ENCODE measurements at regions of chr5 and their contacts with region 1.

Region 1: DNA sequence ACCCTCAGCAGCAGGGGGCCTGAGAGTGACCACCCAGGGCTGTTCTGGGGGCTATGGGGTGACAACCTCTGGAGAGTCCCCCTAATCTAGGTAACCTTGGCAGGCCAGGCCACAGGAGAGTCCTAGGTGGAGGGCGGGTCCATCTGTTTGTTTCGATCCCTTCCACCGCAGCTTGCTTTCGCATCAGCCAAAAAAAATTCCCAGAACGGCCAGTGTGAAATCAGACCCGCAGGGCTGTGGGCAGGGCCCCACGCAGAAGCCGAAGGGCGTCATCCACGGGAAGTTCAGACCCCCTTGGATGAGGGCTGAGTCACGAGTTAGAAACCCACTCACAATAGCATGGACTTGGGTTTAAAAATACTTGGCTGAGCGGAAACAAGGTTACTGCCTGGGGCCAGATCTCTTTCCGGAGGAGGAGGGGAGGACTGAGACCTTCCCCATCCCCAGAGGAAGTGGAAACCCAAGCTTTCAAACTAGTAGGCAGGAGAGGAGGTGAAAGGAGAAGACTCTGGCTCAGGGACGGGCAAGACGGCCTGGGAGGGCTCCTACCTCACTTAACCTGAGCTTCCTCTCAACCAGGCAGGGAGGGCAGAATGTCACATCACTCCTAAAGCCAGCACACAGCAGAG is 8.5 kb downstream of the STK10 start:
- DNase-seq: peak in 9 of 14 experiments; percentile 23 to 83 (median 41)
- ATAC-seq: peak; percentile 1
- H3K4me3 ChIP-seq: peak overlapping the region; percentile 57
- H3K4me3 Mint-ChIP-seq: peak overlapping the region; percentile 91
- H3K27ac ChIP-seq: peak overlapping the region; percentile 97 to 98
- H3K27ac Mint-ChIP-seq: peak overlapping the region; percentile 98
- H3K4me1 ChIP-seq: peaks cover 99% of the 10 kb centered on the region
- H3K4me1 Mint-ChIP-seq: peaks cover 93% of the 10 kb centered on the region
- H3K27me3 ChIP-seq: no peaks in the 10 kb centered on the region
- H3K27me3 Mint-ChIP-seq: no peaks in the 10 kb centered on the region
- CTCF ChIP-seq: no peak

Region 2: GRCh38 chr5:172065501-172065990 is 113.9 kb before region 1 on chr5:
- CTCF ChIA-PET with region 1: interaction called, 3 read pairs
- POLR2A ChIA-PET with region 1: interaction called, 41 read pairs
- intact Hi-C with region 1: no loop called
- DNase-seq: peak in 1 of 14 experiments; percentile 34
- ATAC-seq: no peak
- H3K4me3 ChIP-seq: no peak overlapping the region
- H3K4me3 Mint-ChIP-seq: no peak overlapping the region
- H3K27ac ChIP-seq: peak overlapping the region; percentile 69 to 84
- H3K27ac Mint-ChIP-seq: peak overlapping the region; percentile 89
- H3K4me1 ChIP-seq: peaks cover 44% of the 10 kb centered on the region
- H3K4me1 Mint-ChIP-seq: peaks cover 76% of the 10 kb centered on the region
- H3K27me3 ChIP-seq: no peaks in the 10 kb centered on the region
- H3K27me3 Mint-ChIP-seq: no peaks in the 10 kb centered on the region
- CTCF ChIP-seq: no peak

Region 3: DNA sequence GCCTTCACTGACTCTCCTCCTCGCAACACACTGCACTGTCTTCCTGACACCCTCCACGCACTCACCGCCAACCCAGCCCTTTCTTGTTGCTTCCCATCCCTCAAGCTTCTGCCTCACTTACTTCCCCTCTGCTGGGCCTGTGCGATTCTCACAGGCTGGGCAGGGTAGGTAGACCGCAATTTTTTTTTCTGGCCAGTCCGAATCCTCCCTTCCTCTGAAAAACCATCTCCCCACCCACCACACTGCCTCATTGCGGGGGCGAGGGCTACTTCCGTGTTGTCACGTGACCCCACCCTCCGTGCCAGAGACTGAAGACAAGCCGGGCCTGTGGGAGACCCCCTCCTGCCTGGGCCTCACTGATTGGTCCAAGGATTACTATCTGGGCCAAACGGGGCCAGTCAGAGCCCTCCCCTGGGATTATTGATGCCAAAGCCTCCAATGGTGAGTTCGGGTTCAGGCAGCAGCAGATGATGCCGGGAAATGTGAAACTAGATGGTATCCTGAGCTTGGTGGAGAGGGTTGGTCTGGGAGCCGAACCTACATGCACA is 64.5 kb before region 1 on chr5:
- CTCF ChIA-PET with region 1: interaction called, 3 read pairs
- POLR2A ChIA-PET with region 1: interaction called, 86 read pairs
- intact Hi-C with region 1: loop called in 1 of 2 experiments (anchors 1 kb)
- DNase-seq: peak in 13 of 14 experiments; percentile 33 to 90 (median 51)
- ATAC-seq: peak; percentile 18
- H3K4me3 ChIP-seq: peak overlapping the region; percentile 19
- H3K4me3 Mint-ChIP-seq: peak overlapping the region; percentile 57
- H3K27ac ChIP-seq: peak overlapping the region; percentile 79 to 84
- H3K27ac Mint-ChIP-seq: peak overlapping the region; percentile 91
- H3K4me1 ChIP-seq: peaks cover 96% of the 10 kb centered on the region
- H3K4me1 Mint-ChIP-seq: peaks cover 82% of the 10 kb centered on the region
- H3K27me3 ChIP-seq: no peaks in the 10 kb centered on the region
- H3K27me3 Mint-ChIP-seq: no peaks in the 10 kb centered on the region
- CTCF ChIP-seq: no peak

Region 4: GRCh38 chr5:172144291-172144815 is 35.1 kb before region 1 on chr5:
- CTCF ChIA-PET with region 1: no interaction called
- POLR2A ChIA-PET with region 1: interaction called, 9 read pairs
- intact Hi-C with region 1: loop called in 1 of 2 experiments (anchors 5 kb)
- DNase-seq: no peak
- ATAC-seq: peak; percentile 19
- H3K4me3 ChIP-seq: no peak overlapping the region
- H3K4me3 Mint-ChIP-seq: no peak overlapping the region
- H3K27ac ChIP-seq: peak overlapping the region in 1 of 2 donors; percentile 48
- H3K27ac Mint-ChIP-seq: peak overlapping the region; percentile 87
- H3K4me1 ChIP-seq: peaks cover 86% of the 10 kb centered on the region
- H3K4me1 Mint-ChIP-seq: peaks cover 91% of the 10 kb centered on the region
- H3K27me3 ChIP-seq: no peaks in the 10 kb centered on the region
- H3K27me3 Mint-ChIP-seq: no peaks in the 10 kb centered on the region
- CTCF ChIP-seq: no peak

Region 5: DNA sequence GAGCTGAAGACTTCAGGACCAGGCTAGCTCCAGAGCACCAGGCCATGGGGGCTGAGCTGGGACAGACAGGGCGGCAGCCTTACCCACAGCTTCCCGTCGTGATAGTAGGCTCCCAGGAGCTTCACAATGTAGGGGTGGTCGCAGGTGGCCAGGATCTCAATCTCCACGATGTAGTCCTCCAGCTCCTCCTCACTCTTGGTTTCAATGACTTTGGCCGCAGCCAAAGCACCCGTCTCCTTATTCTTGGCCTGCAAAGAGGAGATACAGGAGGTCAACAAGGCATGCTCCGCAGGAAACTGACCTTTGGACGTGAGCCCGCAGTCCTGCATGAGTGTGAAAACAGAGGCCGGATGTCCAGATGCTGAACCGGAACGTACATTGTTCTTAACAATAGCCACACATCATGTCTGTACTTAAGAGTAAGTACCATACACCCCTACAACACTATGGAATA is 22.9 kb before region 1 on chr5:
- CTCF ChIA-PET with region 1: interaction called, 5 read pairs
- POLR2A ChIA-PET with region 1: interaction called, 29 read pairs
- intact Hi-C with region 1: no loop called
- DNase-seq: no peak
- ATAC-seq: no peak
- H3K4me3 ChIP-seq: no peak overlapping the region
- H3K4me3 Mint-ChIP-seq: peak overlapping the region; percentile 20
- H3K27ac ChIP-seq: no peak overlapping the region
- H3K27ac Mint-ChIP-seq: peak overlapping the region; percentile 72
- H3K4me1 ChIP-seq: peaks cover 72% of the 10 kb centered on the region
- H3K4me1 Mint-ChIP-seq: peaks cover 79% of the 10 kb centered on the region
- H3K27me3 ChIP-seq: no peaks in the 10 kb centered on the region
- H3K27me3 Mint-ChIP-seq: no peaks in the 10 kb centered on the region
- CTCF ChIP-seq: no peak

Region 6: GRCh38 chr5:172764849-172765765 is 585.6 kb after region 1 on chr5:
- CTCF ChIA-PET with region 1: no interaction called
- POLR2A ChIA-PET with region 1: interaction called, 5 read pairs
- intact Hi-C with region 1: loop called (anchors 10 kb)
- DNase-seq: peak; percentile 87 to 100 (median 94)
- ATAC-seq: peak; percentile 75
- H3K4me3 ChIP-seq: peak overlapping the region; percentile 44
- H3K4me3 Mint-ChIP-seq: peak overlapping the region; percentile 71
- H3K27ac ChIP-seq: peak overlapping the region; percentile 89
- H3K27ac Mint-ChIP-seq: peak overlapping the region; percentile 95
- H3K4me1 ChIP-seq: peaks cover 59% of the 10 kb centered on the region
- H3K4me1 Mint-ChIP-seq: peaks cover 55% of the 10 kb centered on the region
- H3K27me3 ChIP-seq: no peaks in the 10 kb centered on the region
- H3K27me3 Mint-ChIP-seq: no peaks in the 10 kb centered on the region
- CTCF ChIP-seq: no peak

Measured in CD4-positive, alpha-beta T cell (primary cell).